T-cell (primary cell): ENCODE measurements at regions of chr10 and their contacts with region 1.

Region 1: DNA sequence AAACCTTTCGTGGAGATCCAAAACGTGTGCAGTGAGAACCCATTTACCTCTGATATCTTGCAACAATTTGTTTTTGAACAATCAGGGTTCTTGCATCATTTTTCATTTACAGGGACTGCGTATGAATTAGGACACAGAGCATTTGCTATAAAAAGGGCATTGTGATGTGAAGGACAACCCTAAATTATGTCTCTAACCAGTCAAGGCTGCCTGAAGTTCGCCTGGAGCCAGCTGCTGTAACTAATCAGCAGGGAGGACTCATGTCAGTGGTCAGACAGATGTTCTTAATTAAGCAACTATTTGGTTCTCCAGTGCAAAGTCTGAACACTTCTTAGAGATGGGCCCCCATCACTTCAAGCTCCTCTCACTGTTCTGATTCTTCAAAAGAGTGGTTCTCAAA is 674.8 kb downstream of the KCNMA1 start:
- DNase-seq: no peak
- ATAC-seq: no peak
- H3K4me3 ChIP-seq: no peak overlapping the region
- H3K4me3 Mint-ChIP-seq: no peak overlapping the region
- H3K27ac ChIP-seq: no peak overlapping the region
- H3K27ac Mint-ChIP-seq: no peak overlapping the region
- H3K4me1 ChIP-seq: peaks cover 0 to 7% of the 10 kb centered on the region in 2 experiments
- H3K4me1 Mint-ChIP-seq: peaks cover 0 to 16% (median 6%) of the 10 kb centered on the region in 3 donors
- H3K27me3 ChIP-seq: peaks cover 0 to 14% of the 10 kb centered on the region in 2 experiments
- H3K27me3 Mint-ChIP-seq: peaks cover 9 to 14% of the 10 kb centered on the region in 2 donors

Region 2: GRCh38 chr10:76902949-76903348 is 59.9 kb before region 1 on chr10:
- CTCF ChIA-PET with region 1: no interaction called
- POLR2A ChIA-PET with region 1: no interaction called
- DNase-seq: peak in 1 of 35 experiments; percentile 3
- ATAC-seq: no peak
- H3K4me3 ChIP-seq: no peak overlapping the region
- H3K4me3 Mint-ChIP-seq: no peak overlapping the region
- H3K27ac ChIP-seq: no peak overlapping the region
- H3K27ac Mint-ChIP-seq: no peak overlapping the region
- H3K4me1 ChIP-seq: no peaks in the 10 kb centered on the region
- H3K4me1 Mint-ChIP-seq: no peaks in the 10 kb centered on the region
- H3K27me3 ChIP-seq: no peaks in the 10 kb centered on the region
- H3K27me3 Mint-ChIP-seq: peaks cover 0 to 3% of the 10 kb centered on the region in 2 donors

Region 3: DNA sequence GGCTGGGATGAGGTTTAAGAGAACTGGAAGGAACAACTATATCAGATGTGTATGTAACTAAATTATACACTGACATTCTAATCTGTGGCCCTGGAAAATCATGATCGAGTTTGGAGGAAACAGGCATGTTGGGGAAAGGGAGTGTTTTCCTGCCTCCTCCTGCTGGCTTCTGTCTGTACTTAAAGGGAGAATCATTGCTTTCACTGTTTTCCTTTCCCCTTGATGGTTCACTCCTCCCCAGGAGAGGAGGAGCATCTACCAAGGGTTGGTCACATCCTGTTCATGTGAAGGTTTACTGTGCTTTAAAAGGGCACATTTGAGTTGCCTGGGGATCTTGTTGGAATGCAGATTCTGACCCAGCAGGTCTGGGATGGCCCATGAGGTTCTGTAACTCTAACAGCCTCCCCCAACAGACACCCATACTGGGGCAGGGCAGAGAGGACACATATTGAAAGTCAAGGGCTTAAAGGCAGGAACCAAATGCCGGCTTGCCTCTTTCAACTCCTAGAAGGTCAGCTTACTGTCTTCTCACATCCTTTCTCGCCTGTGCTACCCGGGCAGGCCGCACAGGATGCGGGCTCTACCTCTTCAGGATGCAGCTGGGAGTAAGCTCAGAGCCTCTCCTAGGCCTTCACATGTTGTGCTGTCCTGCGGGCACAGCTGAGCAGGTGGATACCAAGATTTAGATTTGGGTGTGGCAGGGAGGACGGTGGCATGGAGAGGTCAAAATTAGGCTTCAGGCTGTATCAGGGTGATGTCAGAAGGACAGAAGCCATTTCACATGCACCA is 20.0 kb before region 1 on chr10:
- CTCF ChIA-PET with region 1: no interaction called
- POLR2A ChIA-PET with region 1: interaction called in 1 of 2 experiments, 10 read pairs
- DNase-seq: peak in 3 of 35 experiments; percentile 5 to 16 (median 12)
- ATAC-seq: peak in 1 of 4 experiments; percentile 78
- H3K4me3 ChIP-seq: no peak overlapping the region
- H3K4me3 Mint-ChIP-seq: no peak overlapping the region
- H3K27ac ChIP-seq: no peak overlapping the region
- H3K27ac Mint-ChIP-seq: peak overlapping the region in 1 of 2 donors; percentile 88
- H3K4me1 ChIP-seq: no peaks in the 10 kb centered on the region
- H3K4me1 Mint-ChIP-seq: peaks cover 0 to 15% (median 0%) of the 10 kb centered on the region in 3 donors
- H3K27me3 ChIP-seq: no peaks in the 10 kb centered on the region
- H3K27me3 Mint-ChIP-seq: peaks cover 3 to 22% of the 10 kb centered on the region in 2 donors

Region 4: GRCh38 chr10:76973515-76974278 is 10.8 kb after region 1 on chr10:
- CTCF ChIA-PET with region 1: no interaction called
- POLR2A ChIA-PET with region 1: no interaction called
- DNase-seq: no peak
- ATAC-seq: no peak
- H3K4me3 ChIP-seq: no peak overlapping the region
- H3K4me3 Mint-ChIP-seq: no peak overlapping the region
- H3K27ac ChIP-seq: no peak overlapping the region
- H3K27ac Mint-ChIP-seq: no peak overlapping the region
- H3K4me1 ChIP-seq: no peaks in the 10 kb centered on the region
- H3K4me1 Mint-ChIP-seq: peaks cover 0 to 8% (median 0%) of the 10 kb centered on the region in 3 donors
- H3K27me3 ChIP-seq: peaks cover 0 to 2% of the 10 kb centered on the region in 2 experiments
- H3K27me3 Mint-ChIP-seq: peaks cover 0 to 10% of the 10 kb centered on the region in 2 donors